IMR-90 (cell line): ENCODE measurements at regions of chr2 and their contacts with region 1.

Region 1: DNA sequence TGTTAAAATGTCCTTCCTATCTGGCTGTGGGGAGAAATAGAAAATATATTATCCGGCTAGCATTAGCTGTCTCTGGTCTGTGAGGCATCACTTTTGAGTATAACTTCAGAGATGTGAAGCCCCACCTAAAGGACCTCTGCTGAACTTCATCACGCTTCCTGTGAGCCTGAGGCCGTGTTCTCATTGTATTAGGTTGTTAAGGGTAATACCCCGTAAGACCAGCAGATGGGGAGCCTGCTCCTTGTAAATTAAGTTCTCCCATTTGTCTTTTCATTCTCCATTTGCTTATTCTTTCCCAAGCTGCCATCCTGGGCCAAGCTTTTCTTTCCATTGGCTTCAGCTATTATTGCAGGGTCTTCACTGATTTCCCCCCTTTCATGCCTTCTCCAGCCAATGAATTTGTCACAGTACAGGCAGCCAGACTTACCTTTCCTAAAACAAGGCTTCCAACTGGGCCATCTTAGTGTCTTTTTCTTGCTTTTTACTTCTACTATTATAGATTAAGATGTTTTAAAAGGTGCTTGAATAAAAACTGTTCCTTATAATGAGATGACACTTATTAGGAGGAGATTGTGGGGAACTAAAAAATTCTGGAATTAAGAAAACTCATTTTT is 12.4 kb downstream of the NIF3L1 start:
- DNase-seq: peak; percentile 90
- ATAC-seq: peak; percentile 98
- H3K4me3 ChIP-seq: no peak overlapping the region
- H3K27ac ChIP-seq: no peak overlapping the region
- H3K4me1 ChIP-seq: no peaks in the 10 kb centered on the region
- H3K27me3 ChIP-seq: no peaks in the 10 kb centered on the region
- CTCF ChIP-seq: peak; percentile 93
- POLR2A ChIP-seq: no peak
- RAD21 ChIP-seq: peak; percentile 83

Region 2: DNA sequence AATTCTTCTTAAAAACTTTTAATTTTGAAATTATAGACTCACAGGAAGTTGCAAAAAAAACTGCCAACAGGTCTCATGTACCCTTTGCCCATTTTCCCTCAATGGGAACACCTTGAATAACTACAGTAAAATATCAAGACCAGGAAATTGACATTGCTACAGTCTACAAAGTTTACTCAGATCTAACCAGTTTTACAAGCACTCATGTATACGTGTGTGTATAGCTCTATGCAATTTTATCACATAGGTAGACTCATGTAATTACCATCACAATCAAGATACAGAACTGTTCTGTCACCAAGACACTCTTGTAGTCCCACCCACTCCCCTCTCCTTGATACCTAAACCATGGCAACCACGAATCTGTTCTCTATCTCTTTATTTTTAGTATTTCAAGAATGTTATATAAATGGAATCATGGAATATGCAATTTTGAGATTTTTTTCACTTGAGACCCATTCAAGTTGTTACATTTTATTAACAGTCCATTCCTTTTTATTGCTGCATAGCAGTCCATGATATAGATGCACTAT is 163.3 kb after region 1 on chr2:
- CTCF ChIA-PET with region 1: interaction called, 12 read pairs
- POLR2A ChIA-PET with region 1: no interaction called
- dilution Hi-C with region 1: no loop called
- in situ Hi-C with region 1: loop called (anchors 5 kb)
- intact Hi-C with region 1: loop called (anchors 1 kb)
- DNase-seq: no peak
- ATAC-seq: no peak
- H3K4me3 ChIP-seq: no peak overlapping the region
- H3K27ac ChIP-seq: no peak overlapping the region
- H3K4me1 ChIP-seq: no peaks in the 10 kb centered on the region
- H3K27me3 ChIP-seq: no peaks in the 10 kb centered on the region
- CTCF ChIP-seq: no peak
- POLR2A ChIP-seq: no peak
- RAD21 ChIP-seq: no peak

Region 3: GRCh38 chr2:201171259-201171814 is 269.8 kb after region 1 on chr2:
- CTCF ChIA-PET with region 1: no interaction called
- POLR2A ChIA-PET with region 1: no interaction called
- dilution Hi-C with region 1: no loop called
- in situ Hi-C with region 1: loop called (anchors 5 kb)
- intact Hi-C with region 1: no loop called
- DNase-seq: no peak
- ATAC-seq: no peak
- H3K4me3 ChIP-seq: no peak overlapping the region
- H3K27ac ChIP-seq: no peak overlapping the region
- H3K4me1 ChIP-seq: no peaks in the 10 kb centered on the region
- H3K27me3 ChIP-seq: no peaks in the 10 kb centered on the region
- CTCF ChIP-seq: no peak
- POLR2A ChIP-seq: no peak
- RAD21 ChIP-seq: no peak